A549 (cell line): ENCODE measurements at regions of chr9 and their contacts with region 1.

Region 1: DNA sequence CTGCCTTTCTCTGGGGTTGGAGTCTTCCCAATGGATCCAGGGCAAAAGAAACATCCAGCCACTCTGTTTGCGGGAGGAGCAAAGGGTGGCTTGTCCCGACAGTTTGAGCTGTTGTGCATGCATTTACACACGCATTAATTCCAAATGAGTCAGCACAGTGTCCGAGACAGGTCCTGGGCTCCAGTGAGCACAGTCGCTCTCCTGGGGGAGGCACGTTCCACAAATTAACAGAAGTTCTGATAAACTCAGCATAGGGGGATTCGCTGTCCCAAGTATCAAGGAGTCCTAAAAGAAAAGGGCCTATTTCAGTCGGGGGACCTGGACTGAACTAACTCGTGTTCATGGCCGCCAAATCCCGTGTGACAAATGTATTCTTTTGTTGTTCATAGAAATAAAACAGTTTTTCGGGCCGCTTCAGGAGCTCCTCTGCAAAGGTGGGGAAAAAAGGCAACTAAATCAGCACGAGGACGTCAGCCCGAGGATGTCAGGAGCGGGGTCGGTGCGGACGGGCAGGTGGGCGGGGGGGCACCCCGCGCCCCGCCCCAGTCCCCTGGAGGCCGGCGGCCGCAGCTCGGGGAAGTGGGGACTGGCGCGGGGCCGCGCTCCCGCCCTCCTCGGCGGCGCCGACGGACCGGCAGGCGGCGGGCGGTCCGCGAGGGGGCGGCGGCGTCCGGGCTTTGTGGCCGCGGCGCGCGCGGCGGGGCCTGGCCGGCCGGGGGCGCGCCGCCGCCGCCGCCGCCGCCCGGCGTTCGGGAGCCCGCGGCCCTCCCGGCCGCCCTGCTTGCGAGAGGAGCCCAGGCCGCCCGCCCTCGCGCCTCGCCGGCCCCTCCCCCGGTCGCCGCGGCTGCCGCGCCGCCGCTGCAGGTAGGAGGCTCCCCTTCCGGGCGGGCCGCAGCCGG is at the start of gene MSANTD3:
- DNase-seq: peak; percentile 74 to 77
- ATAC-seq: peak; percentile 68 to 69
- H3K4me3 ChIP-seq: peak within 1 kb of the TSS; percentile 89
- H3K27ac ChIP-seq: peak within 1 kb of the TSS; percentile 99 to 100
- H3K4me1 ChIP-seq: peaks cover 30% of the 10 kb centered on the region
- CTCF ChIP-seq: peak; percentile 21; the same call in 2 of the 3 replicates
- EP300 ChIP-seq: no peak
- POLR2A ChIP-seq: peak; percentile 27; the same call in 1 of the 2 replicates
- RAD21 ChIP-seq: no peak
- polyA plus RNA-seq, gene MSANTD3: 48.3 and 66.7 TPM in 2 replicates

Region 2: GRCh38 chr9:100352727-100353505 is 73.9 kb before region 1 on chr9 and contains the start of gene TEX10:
- CTCF ChIA-PET with region 1: interaction called, 4 read pairs
- POLR2A ChIA-PET with region 1: interaction called, 13 read pairs
- DNase-seq: peak; percentile 86 to 87
- ATAC-seq: peak; percentile 88 to 91
- H3K4me3 ChIP-seq: peak within 1 kb of the TSS; percentile 99
- H3K27ac ChIP-seq: peak within 1 kb of the TSS; percentile 98 to 99
- H3K4me1 ChIP-seq: peaks cover 26% of the 10 kb centered on the region; the same call in 2 of the 3 replicates
- CTCF ChIP-seq: no peak
- EP300 ChIP-seq: no peak
- POLR2A ChIP-seq: peak; percentile 86; the same call in 1 of the 2 replicates
- RAD21 ChIP-seq: 0 out of 5 replicates have a peak, but pooled peaks of 1 of the 2 experiments have one; percentile 14
- polyA plus RNA-seq, gene TEX10: 31.2 and 37.0 TPM in 2 replicates

Region 3: DNA sequence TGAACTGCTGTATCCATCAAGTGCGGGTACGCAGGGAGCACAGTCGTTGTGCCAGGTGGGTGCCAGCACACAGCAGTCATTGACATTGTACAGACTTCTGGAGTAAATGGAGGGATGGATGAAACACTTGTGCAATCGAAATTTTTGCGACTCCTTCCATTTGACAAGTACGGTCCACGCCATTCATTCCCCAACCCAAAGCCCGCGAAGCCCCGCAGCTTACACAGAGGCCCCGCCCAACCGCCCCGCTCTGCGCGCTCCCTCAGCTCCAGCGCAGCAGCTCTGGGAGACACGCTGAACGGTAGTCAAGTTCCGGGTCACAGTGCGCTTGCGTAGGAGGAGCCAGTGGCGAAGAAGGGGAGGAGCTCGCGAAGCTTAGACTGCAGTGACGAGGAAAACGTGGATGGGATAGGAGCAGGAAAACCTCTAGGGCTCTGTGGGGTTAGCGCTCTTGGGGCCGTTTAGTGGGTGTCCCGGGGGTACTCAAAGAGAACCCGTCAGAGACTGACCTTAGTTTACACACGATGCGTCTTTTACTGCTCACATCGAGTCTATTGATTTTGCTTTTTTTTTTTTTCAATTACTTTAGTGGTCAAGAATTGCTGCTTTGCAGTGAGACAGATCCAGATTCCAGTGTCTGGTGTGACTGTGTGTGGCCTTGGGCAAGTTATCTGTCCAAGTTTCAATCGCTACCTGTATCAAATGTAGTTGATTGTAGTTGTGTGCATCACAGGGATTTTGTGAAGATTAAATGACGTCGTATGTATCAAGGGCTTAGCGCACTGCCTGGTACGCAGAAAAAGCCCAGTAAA is 15.1 kb before region 1 on chr9:
- CTCF ChIA-PET with region 1: interaction called, 4 read pairs
- POLR2A ChIA-PET with region 1: interaction called, 17 read pairs
- DNase-seq: peak; percentile 93 to 99
- ATAC-seq: peak; percentile 100
- H3K4me3 ChIP-seq: peak overlapping the region; percentile 50
- H3K27ac ChIP-seq: peak overlapping the region; percentile 74 to 86
- H3K4me1 ChIP-seq: 0 out of 3 replicates have a peak, but pooled peaks cover 4% of the 10 kb centered on the region
- CTCF ChIP-seq: no peak
- EP300 ChIP-seq: no peak
- POLR2A ChIP-seq: peak; percentile 89
- RAD21 ChIP-seq: no peak

Region 4: GRCh38 chr9:100437860-100438805 is 11.4 kb after region 1 on chr9:
- CTCF ChIA-PET with region 1: interaction called, 15 read pairs
- POLR2A ChIA-PET with region 1: interaction called, 7 read pairs
- DNase-seq: peak; percentile 70 to 81
- ATAC-seq: peak; percentile 60 to 80; a peak in 5 of 6 replicates
- H3K4me3 ChIP-seq: no peak overlapping the region
- H3K27ac ChIP-seq: no peak overlapping the region
- H3K4me1 ChIP-seq: 0 out of 3 replicates have a peak, but pooled peaks cover 4% of the 10 kb centered on the region
- CTCF ChIP-seq: peak; percentile 82
- EP300 ChIP-seq: no peak
- POLR2A ChIP-seq: no peak
- RAD21 ChIP-seq: peak; percentile 62 to 67